Activated CD4-positive, alpha-beta T cell treated with anti-CD3 and anti-CD28 coated beads for 36 hours (primary cell): ENCODE measurements at regions of chr7 and their contacts with region 1.

Region 1: DNA sequence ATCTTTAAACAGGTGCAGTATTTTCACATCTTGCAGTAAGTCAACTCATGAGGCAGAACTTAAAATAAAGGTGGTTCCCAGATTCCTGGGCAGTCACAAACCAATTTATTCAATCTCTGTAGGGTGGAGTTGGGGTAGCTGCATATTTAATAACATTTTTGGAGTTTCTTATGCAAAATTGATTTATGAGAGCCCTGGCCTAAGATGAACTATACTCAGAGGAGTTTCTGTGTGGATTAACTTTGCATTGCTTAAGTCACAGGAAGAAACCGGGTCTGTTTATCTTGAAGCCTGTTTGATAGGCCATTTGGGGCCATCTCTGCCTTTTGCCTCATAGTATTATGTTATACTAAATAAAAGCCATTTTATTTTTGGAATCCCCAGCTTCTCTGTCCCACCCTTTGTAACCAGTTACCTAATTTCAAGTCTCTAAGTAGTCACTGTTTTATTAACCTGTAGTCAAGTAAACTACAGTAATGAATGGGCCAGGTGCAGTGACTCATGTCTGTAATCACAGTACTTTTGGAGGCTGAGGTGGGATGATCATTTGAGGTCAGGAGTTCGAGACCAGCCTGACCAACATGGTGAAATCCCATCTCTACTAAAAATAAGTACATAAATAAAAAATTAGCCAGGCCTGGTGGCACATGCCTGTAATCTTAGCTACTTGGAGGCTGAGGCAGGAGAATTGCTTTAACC is 104.4 kb upstream of the FAM3C start:
- DNase-seq: peak; percentile 13
- ATAC-seq: peak; percentile 11
- H3K4me3 Mint-ChIP-seq: no peak overlapping the region
- H3K27ac Mint-ChIP-seq: no peak overlapping the region
- H3K4me1 Mint-ChIP-seq: peaks cover 16% of the 10 kb centered on the region
- H3K27me3 Mint-ChIP-seq: peaks cover 7% of the 10 kb centered on the region

Region 2: GRCh38 chr7:121437456-121438127 is 62.9 kb before region 1 on chr7:
- CTCF ChIA-PET with region 1: no interaction called
- POLR2A ChIA-PET with region 1: no interaction called
- intact Hi-C with region 1: loop called in 1 of 2 experiments (anchors 2 kb)
- DNase-seq: no peak
- ATAC-seq: no peak
- H3K4me3 Mint-ChIP-seq: peak overlapping the region; percentile 12
- H3K27ac Mint-ChIP-seq: peak overlapping the region; percentile 79
- H3K4me1 Mint-ChIP-seq: peaks cover 24% of the 10 kb centered on the region
- H3K27me3 Mint-ChIP-seq: no peaks in the 10 kb centered on the region

Region 3: DNA sequence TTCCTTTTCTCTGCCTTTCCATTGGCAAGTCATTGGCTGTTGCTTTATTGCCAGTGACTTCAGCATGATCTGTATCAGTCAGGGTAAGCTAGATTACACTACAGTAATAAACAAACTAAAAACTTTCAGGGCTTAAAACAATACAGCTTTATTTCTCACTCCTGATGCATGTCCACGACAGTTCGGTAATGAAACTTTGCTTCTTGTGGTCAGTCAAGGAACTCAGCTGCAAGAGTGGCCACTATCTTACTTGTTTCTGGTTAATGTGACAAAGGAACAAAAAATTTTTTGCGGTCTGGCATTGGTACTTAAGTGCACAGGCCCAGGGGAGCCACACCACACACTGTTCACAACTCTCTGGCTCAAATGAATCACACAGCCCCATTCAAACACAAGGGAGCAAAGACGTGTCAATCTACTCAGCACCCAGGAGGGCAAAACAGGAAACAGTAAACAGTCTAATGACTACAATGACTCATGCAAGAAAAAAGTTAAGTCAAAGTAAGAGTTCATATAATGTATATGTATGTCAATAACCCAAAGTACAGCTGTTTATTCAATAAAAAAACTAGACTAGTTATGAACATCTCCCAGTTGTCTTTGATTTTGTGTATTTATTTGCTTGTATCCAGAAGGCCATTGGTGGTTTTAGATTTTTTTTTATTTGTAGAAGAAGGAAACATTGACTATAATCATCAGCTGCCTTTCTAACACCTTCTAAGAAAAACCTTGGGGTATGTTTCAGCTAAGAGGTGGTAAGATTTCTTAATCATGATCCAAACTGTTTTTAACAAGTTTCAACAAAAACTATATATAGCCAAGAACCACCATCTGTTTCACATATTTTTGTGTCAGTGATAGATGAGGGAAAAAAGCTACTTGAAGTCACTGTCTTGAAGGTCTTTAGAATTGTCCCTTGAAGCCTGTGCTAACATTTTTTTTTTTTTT is 30.0 kb after region 1 on chr7:
- CTCF ChIA-PET with region 1: no interaction called
- POLR2A ChIA-PET with region 1: no interaction called
- intact Hi-C with region 1: loop called (anchors 1 kb)
- DNase-seq: peak; percentile 64
- ATAC-seq: peak; percentile 97
- H3K4me3 Mint-ChIP-seq: no peak overlapping the region
- H3K27ac Mint-ChIP-seq: peak overlapping the region; percentile 77
- H3K4me1 Mint-ChIP-seq: peaks cover 17% of the 10 kb centered on the region
- H3K27me3 Mint-ChIP-seq: peaks cover 14% of the 10 kb centered on the region

Region 4: DNA sequence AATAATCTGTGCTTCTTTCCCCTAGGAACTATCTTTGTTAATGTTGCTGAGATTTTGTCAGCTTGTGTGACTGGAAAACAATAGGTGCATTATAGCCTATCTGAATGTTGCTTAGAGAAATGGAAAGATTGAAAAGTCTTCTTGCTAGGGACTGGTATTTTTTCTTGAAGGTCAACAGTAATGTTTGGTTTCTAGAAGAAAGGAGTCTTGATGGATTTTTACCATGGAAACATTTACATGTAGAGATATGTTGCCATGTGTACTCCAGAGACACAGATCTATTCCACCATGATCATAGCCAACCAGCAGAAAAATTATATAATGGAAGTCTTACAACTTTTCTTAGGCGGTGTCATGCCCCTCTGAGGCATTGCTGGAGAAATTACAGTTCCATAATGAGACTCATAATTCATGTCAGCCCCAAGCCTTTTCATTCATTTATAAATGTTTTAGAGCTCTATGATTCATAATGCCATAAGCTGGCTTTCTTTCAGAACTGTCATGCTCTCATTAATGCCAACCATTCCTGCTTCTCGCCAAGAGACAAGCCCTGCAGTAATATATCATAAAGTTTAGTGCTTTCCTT is 197.3 kb after region 1 on chr7:
- CTCF ChIA-PET with region 1: no interaction called
- POLR2A ChIA-PET with region 1: no interaction called
- intact Hi-C with region 1: no loop called
- DNase-seq: no peak
- ATAC-seq: no peak
- H3K4me3 Mint-ChIP-seq: no peak overlapping the region
- H3K27ac Mint-ChIP-seq: no peak overlapping the region
- H3K4me1 Mint-ChIP-seq: no peaks in the 10 kb centered on the region
- H3K27me3 Mint-ChIP-seq: no peaks in the 10 kb centered on the region

Region 5: GRCh38 chr7:121832347-121832746 is 331.8 kb after region 1 on chr7:
- CTCF ChIA-PET with region 1: no interaction called
- POLR2A ChIA-PET with region 1: no interaction called
- intact Hi-C with region 1: no loop called
- DNase-seq: no peak
- ATAC-seq: no peak
- H3K4me3 Mint-ChIP-seq: no peak overlapping the region
- H3K27ac Mint-ChIP-seq: no peak overlapping the region
- H3K4me1 Mint-ChIP-seq: no peaks in the 10 kb centered on the region
- H3K27me3 Mint-ChIP-seq: no peaks in the 10 kb centered on the region